ENCODE measurements at regions of chr15 and their contacts with region 1.

Region 1: DNA sequence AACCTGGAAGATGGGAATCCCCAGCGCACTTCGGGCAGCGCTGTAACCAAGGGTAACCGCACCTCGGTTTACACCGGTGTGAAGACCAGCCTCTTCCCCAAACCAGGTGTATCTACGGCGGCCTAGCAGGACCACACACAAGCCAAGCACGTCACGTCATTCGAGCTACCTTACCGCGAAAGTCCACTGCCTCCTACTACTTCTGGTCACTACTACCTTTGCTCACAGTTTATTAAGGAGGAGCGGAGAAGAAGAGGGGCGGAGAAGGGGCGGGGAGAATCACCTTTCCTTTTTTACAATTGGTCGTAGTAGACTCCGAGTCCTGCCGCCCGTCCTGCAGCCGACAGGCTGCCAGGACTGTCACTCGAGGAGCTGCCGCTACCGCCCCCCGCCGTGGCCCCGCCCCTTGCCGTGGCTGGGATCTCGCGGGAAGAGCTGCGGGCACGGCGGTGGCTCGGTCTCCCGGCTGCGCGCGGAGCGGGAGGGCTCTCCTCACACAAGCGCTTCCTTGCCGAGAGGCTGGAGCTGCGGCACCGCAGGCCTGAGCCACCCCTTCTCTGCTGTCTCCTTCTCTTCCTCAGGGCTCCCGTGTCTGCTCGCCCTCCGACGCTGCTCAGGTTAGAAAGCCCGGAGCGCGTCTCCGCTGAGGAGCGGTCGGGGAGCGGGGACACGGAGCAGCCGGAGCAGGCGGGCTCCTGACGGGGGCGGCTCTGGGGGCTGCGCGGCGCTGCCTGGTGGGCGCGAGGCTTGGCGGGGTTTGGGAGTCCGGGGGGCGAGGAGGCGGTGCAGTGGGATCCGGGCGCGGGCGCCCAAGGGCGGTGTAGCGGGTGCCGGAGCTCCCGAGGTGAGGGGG is at the start of gene GLCE:
- DNase-seq: peak; percentile 97 to 98 (median 97)
- ATAC-seq: peak; percentile 97
- H3K4me3 ChIP-seq: peak within 1 kb of the TSS; percentile 76
- H3K4me1 ChIP-seq: peaks cover 9% of the 10 kb centered on the region
- CTCF ChIP-seq: no peak
- total RNA-seq, gene GLCE: 17.7 to 36.4 (median 32.3) TPM

Region 2: GRCh38 chr15:69090197-69090948 is 70.0 kb before region 1 on chr15:
- intact Hi-C with region 1: no loop called
- DNase-seq: no peak
- ATAC-seq: no peak
- H3K4me3 ChIP-seq: no peak overlapping the region
- H3K4me1 ChIP-seq: no peaks in the 10 kb centered on the region
- CTCF ChIP-seq: no peak

Region 3: GRCh38 chr15:69225355-69226025 is 65.1 kb after region 1 on chr15:
- intact Hi-C with region 1: loop called in 1 of 2 experiments (anchors 10 kb)
- DNase-seq: no peak
- ATAC-seq: peak; percentile 56
- H3K4me3 ChIP-seq: no peak overlapping the region
- H3K4me1 ChIP-seq: peaks cover 25% of the 10 kb centered on the region
- CTCF ChIP-seq: no peak